Activated CD4-positive, alpha-beta T cell treated with anti-CD3 and anti-CD28 coated beads for 36 hours (primary cell): ENCODE measurements at regions of chr16 and their contacts with region 1.

Region 1: GRCh38 chr16:30997000-30997886 is 12.2 kb downstream of the HSD3B7 start:
- DNase-seq: peak; percentile 94
- ATAC-seq: peak; percentile 95
- H3K4me3 Mint-ChIP-seq: peak overlapping the region; percentile 72
- H3K27ac Mint-ChIP-seq: no peak overlapping the region
- H3K4me1 Mint-ChIP-seq: peaks cover 16% of the 10 kb centered on the region
- H3K27me3 Mint-ChIP-seq: peaks cover 3% of the 10 kb centered on the region

Region 2: DNA sequence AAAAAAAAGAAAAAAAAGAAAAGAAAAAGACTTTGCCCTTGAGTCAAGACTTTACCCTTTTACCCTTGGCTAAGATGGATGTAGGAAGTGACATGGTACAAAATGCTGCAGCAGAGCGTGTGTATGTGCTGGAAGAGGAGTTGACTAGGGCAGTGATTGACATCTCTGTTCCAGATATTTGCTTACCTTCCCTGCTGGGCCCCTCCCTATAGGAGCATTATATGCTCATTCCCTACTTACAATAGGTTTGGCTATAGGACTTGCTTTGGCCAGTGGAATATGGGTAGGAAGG is 46.9 kb after region 1 on chr16:
- CTCF ChIA-PET with region 1: no interaction called
- POLR2A ChIA-PET with region 1: no interaction called
- intact Hi-C with region 1: loop called in 1 of 2 experiments (anchors 10 kb)
- DNase-seq: no peak
- ATAC-seq: no peak
- H3K4me3 Mint-ChIP-seq: no peak overlapping the region
- H3K27ac Mint-ChIP-seq: no peak overlapping the region
- H3K4me1 Mint-ChIP-seq: no peaks in the 10 kb centered on the region
- H3K27me3 Mint-ChIP-seq: no peaks in the 10 kb centered on the region

Region 3: DNA sequence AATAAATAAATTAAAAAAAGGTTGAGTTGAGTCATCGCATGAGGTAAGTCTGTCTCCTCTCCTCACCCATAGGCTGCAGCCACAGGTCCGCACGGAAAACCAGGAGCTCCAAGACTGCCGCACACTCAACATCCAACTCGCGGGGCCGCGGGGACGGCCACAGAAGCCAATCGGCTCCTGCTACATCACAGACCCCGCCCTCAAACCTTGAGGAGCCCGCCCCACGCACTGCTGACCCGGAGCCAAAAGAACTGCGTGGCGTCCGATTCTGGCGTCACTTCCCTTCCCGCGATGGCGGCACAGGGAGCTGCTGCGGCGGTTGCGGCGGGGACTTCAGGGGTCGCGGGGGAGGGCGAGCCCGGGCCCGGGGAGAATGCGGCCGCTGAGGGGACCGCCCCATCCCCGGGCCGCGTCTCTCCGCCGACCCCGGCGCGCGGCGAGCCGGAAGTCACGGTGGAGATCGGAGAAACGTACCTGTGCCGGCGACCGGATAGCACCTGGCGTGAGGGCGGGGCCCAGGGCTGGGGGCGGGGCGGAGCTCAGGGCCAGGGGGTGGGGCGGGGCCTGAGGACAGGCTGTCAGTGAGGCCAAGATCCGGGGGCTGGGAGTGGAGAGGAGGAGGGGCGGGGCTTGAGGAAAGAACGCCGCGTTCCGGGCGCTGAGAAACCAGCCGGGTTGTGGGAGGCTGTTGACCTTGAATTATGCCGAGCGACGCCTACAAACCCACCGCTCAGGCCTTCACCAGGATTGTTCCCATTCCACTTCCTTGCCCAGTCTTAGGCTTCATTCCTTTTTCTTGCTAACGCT is 120.4 kb after region 1 on chr16 and contains the start of gene KAT8:
- CTCF ChIA-PET with region 1: no interaction called
- POLR2A ChIA-PET with region 1: no interaction called
- intact Hi-C with region 1: loop called in 1 of 2 experiments (anchors 1 kb)
- DNase-seq: peak; percentile 99
- ATAC-seq: peak; percentile 93
- H3K4me3 Mint-ChIP-seq: peak within 1 kb of the TSS; percentile 88
- H3K27ac Mint-ChIP-seq: peak within 1 kb of the TSS; percentile 83
- H3K4me1 Mint-ChIP-seq: peaks cover 14% of the 10 kb centered on the region
- H3K27me3 Mint-ChIP-seq: no peaks in the 10 kb centered on the region
- total RNA-seq, gene KAT8: 53.6 to 63.1 TPM

Region 4: DNA sequence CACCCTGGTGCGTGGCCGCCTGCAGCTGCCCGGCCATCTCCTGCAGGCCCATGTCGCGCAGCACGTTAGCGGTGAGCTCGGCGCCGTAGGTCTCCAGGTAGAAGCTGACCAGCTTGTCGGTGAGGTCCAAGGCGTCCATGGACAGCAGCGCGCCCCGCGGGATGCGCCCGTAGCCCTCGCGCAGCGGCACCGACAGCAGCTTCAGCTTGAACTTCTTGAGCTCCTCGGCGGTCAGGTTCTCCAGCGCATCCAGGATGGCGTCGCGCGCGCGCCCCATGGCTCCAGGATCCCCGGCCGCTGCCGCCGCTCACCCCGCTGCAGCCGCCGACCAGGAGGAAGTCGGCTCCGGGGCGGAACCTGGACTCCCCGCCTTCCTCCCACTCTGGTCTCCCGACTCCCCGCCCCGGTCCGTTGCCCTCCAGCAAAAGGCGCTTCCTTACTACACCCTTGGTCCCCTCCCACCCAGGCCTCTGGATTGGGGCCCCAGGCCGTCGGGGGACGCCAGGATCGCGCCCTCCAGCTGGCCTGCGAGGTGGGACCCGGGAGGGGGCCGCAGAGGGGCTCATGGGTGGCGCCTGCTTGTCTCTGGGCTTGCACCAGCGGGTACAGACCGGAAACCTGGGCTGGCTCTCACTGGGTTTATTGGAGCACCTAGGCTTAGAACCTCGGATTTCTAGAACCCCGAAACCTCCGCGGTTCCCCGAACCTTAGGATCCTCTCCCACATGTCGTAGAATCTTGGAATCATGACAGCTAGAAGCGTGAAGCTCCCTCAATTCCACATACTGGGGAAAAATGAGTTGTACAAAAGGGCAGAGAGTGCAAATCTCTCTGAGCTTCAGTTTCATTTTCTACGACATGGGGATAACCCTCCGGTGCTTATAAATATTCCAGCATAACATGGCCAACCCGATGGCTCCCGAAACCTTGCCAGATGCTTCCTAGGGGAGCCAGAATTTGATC is 205.5 kb after region 1 on chr16 and contains the start of gene PYCARD:
- CTCF ChIA-PET with region 1: no interaction called
- POLR2A ChIA-PET with region 1: no interaction called
- intact Hi-C with region 1: no loop called
- DNase-seq: peak; percentile 53
- ATAC-seq: peak; percentile 7
- H3K4me3 Mint-ChIP-seq: peak within 1 kb of the TSS; percentile 71
- H3K27ac Mint-ChIP-seq: peak within 1 kb of the TSS; percentile 52
- H3K4me1 Mint-ChIP-seq: peaks cover 47% of the 10 kb centered on the region
- H3K27me3 Mint-ChIP-seq: peaks cover 3% of the 10 kb centered on the region
- total RNA-seq, gene PYCARD: 5.7 TPM